ENCODE measurements at regions of chr2 and their contacts with region 1.

Region 1: DNA sequence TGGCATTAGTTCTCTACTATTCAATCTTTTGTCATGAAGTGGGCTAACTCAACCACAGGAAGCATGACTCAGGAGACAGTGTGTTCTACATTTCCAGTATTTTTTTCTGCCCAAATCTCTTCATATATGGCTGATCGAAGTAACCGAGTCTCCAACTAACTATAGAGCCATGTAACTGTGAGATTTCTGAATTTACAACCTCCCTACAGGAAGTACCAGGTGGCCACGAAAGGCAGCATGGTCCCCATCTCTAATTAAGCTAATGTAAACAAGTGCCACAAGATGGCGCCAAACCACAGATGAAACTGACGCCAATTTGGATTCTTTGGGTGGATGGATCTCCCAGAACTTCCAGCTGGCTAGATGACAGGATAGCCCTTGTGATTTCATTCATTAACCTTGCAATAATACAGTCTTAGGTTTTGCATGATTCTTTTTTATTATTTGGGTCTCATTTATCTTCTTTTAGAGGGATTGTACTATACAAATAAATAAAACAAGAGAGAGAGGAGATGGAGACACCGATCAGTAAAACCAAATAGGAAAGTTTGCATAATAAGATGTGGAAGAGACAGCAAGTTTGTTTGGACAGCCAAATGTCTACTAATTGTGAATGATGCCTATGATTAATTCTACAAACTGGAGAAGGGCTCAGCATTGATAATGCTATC is 18.3 kb upstream of the ARHGAP15 start:
- DNase-seq: peak; percentile 60
- H3K4me3 ChIP-seq: no peak overlapping the region
- H3K27ac ChIP-seq: no peak overlapping the region
- H3K4me1 ChIP-seq: peaks cover 0 to 3% (median 0%) of the 10 kb centered on the region in 4 donors
- H3K27me3 ChIP-seq: no peaks in the 10 kb centered on the region
- CTCF ChIP-seq: peak; percentile 51 to 62 (median 53)
- EP300 ChIP-seq: no peak
- POLR2A ChIP-seq: no peak

Region 2: DNA sequence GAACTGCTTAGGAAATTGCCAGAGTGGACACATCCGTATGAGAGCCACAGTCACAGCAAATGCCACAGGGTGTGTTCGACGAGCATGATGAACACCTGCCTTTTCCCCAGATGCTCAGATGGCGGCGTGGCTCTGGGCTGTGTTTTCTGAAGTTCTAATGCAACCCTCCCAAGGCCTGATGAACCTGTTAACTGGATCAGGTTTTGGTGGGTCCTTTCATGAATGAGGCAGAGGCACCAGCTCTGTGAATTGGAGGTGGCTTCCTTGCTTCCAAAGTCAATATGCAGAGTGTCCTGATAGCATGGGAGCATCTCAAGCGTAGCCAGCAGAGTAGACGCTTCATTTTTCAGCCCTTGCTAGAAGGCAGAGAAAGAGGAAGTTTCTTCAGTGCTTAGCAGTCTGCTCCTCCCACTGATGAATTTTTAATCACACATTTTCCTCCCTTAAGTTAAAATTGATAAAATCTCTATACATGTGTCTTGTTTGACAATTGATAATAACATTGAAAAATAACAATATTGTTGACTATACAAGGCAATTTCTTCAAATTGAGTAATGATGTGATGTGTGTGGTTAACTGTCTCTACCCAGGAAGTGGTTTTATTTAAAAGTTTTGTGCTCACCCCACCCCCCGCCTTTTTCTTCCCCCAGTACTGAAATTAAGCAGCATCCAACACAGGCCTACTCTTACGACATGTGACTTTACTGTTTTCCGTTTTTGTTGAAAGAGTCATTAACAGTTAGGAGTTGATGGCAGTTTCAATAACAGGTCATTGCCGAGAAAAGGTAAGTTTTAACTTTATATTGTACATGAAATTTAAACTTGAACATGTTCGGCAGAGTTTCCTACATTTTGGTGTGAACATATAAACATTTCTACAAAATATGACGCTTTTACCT is 18.0 kb after region 1 on chr2 and contains the start of gene ARHGAP15:
- in situ Hi-C with region 1: no loop called
- intact Hi-C with region 1: loop called (anchors 2 kb)
- DNase-seq: peak; percentile 39
- H3K4me3 ChIP-seq: peak within 1 kb of the TSS in 1 of 4 donors; percentile 10
- H3K27ac ChIP-seq: peak within 1 kb of the TSS; percentile 47 to 77 (median 70)
- H3K4me1 ChIP-seq: no peaks in the 10 kb centered on the region
- H3K27me3 ChIP-seq: no peaks in the 10 kb centered on the region
- CTCF ChIP-seq: no peak
- EP300 ChIP-seq: no peak
- POLR2A ChIP-seq: peak; percentile 40
- total RNA-seq, gene ARHGAP15: 0.80 to 53.1 (median 12.7) TPM

Region 3: DNA sequence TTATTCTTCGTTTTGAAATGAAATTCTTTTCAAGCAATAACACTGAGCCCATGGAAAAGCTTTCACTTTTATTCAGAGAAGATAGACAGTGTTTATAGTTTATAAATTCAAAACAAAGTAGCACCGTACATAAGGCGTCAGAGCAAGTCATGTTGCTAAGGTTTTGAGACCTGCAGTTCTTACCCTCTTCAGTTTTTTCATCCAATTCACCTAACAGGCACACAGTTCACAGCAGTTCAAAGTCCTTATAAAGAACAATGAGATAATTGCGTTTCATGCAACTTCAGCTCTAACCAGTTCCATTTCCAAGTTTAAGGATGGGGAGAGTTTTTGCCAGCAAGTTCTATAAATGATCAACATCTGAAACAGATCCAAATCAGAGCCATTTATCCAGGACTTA is 115.0 kb after region 1 on chr2:
- in situ Hi-C with region 1: no loop called
- intact Hi-C with region 1: loop called (anchors 2 kb)
- DNase-seq: no peak
- H3K4me3 ChIP-seq: no peak overlapping the region
- H3K27ac ChIP-seq: no peak overlapping the region
- H3K4me1 ChIP-seq: no peaks in the 10 kb centered on the region
- H3K27me3 ChIP-seq: no peaks in the 10 kb centered on the region
- CTCF ChIP-seq: no peak
- EP300 ChIP-seq: no peak
- POLR2A ChIP-seq: no peak

Region 4: DNA sequence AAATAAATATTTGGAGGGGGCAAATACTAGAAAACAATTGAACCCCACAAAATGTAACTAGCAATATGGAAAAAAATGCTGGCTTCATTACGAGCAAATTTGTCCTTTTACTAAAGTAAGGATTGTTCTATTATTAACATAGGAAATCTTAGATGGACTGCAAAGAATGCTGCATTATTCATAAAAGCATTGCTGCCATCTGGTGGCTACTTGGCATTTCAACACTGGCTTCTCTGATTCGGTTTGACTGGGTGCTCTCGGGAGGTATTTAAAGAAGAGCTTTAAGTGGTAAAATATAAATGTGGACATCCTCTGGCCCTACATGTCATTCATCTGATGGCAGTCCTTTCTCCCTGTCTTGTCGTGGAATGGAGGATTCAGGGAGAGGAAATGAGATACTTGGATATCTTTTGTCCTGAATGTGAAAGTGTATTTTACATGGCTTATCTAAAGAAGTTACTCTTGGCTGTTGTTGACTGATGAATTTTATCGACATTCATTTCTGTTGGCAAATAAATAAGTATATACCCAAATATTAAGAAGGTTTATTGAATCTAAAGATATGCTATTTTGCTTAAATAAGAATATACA is 148.6 kb after region 1 on chr2:
- in situ Hi-C with region 1: loop called in 2 of 4 experiments (anchors 25 kb)
- intact Hi-C with region 1: no loop called
- DNase-seq: peak; percentile 66
- H3K4me3 ChIP-seq: no peak overlapping the region
- H3K27ac ChIP-seq: no peak overlapping the region
- H3K4me1 ChIP-seq: peaks cover 0 to 17% (median 0%) of the 10 kb centered on the region in 4 donors
- H3K27me3 ChIP-seq: no peaks in the 10 kb centered on the region
- CTCF ChIP-seq: peak; percentile 63 to 68 (median 66)
- EP300 ChIP-seq: no peak
- POLR2A ChIP-seq: no peak